Thyroid gland (tissue), 4 donors: ENCODE measurements at regions of chr20 and their contacts with region 1.

Region 1: GRCh38 chr20:45095753-45096371 is 5.1 kb downstream of the KCNS1 start:
- DNase-seq: peak; percentile 33 to 47
- H3K4me3 ChIP-seq: no peak overlapping the region
- H3K27ac ChIP-seq: no peak overlapping the region
- H3K4me1 ChIP-seq: peaks cover 3 to 11% of the 10 kb centered on the region in 2 donors
- H3K27me3 ChIP-seq: peaks cover 13% of the 10 kb centered on the region
- CTCF ChIP-seq: peak; percentile 39 to 81 (median 52)
- POLR2A ChIP-seq: no peak

Region 2: DNA sequence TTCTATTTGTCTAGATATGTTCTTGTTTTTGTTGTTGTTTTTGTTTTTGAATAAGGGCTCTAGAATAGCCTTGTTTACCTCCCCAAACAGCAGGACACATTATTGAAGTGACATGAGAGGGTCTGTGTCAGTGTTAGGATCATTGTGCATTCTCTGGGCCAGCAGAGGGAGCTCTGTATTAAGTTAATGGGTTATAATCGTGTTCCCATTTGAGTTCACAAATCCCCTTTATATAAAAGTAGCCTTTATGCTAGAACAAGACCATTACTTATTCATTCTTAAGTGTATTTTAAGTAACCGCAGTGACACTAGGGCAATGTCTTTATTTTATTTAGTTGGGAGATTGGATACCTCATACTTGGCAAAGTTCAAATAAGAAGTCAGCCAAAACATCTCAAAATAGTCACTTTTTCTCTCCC is 84.7 kb before region 1 on chr20:
- intact Hi-C with region 1: loop called (anchors 10 kb)
- DNase-seq: peak; percentile 38 to 50
- H3K4me3 ChIP-seq: no peak overlapping the region
- H3K27ac ChIP-seq: no peak overlapping the region
- H3K4me1 ChIP-seq: no peaks in the 10 kb centered on the region
- H3K27me3 ChIP-seq: no peaks in the 10 kb centered on the region
- CTCF ChIP-seq: peak in 5 of 6 experiments; percentile 29 to 62 (median 57)
- POLR2A ChIP-seq: no peak

Region 3: GRCh38 chr20:45044084-45044573 is 51.7 kb before region 1 on chr20:
- intact Hi-C with region 1: loop called (anchors 10 kb)
- DNase-seq: peak; percentile 11 to 19
- H3K4me3 ChIP-seq: no peak overlapping the region
- H3K27ac ChIP-seq: no peak overlapping the region
- H3K4me1 ChIP-seq: no peaks in the 10 kb centered on the region
- H3K27me3 ChIP-seq: no peaks in the 10 kb centered on the region
- CTCF ChIP-seq: peak; percentile 36 to 91 (median 73)
- POLR2A ChIP-seq: no peak

Region 4: DNA sequence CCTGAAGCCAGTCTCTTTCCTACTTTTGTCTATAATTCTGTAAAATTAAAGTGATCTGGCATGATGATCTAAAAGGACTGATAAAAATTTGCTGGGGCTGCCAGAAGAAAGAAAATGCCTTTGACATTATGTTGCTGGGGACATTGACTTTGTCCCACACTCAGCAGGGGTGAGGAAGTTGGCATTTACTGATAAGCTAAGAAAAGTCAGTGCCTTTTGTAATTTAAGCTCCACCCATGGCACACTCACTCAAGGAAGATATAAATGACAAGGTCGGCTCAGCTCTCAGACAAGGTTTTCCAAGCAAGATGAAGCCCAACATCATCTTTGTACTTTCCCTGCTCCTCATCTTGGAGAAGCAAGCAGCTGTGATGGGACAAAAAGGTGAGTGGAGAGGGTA is 110.9 kb after region 1 on chr20 and contains the start of gene SEMG1:
- intact Hi-C with region 1: no loop called
- DNase-seq: no peak
- H3K4me3 ChIP-seq: no peak within 1 kb of the TSS
- H3K27ac ChIP-seq: no peak within 1 kb of the TSS
- H3K4me1 ChIP-seq: no peaks in the 10 kb centered on the region
- H3K27me3 ChIP-seq: no peaks in the 10 kb centered on the region
- CTCF ChIP-seq: no peak
- POLR2A ChIP-seq: no peak
- total RNA-seq, gene SEMG1: not detected